PC-9 (cell line): ENCODE measurements at regions of chr1 and their contacts with region 1.

Region 1: GRCh38 chr1:43602990-43603389 is 47.0 kb upstream of the KDM4A start:
- DNase-seq: peak in 1 of 2 experiments; percentile 58
- H3K4me3 ChIP-seq: no peak overlapping the region
- H3K27ac ChIP-seq: no peak overlapping the region
- H3K4me1 ChIP-seq: no peaks in the 10 kb centered on the region
- H3K27me3 ChIP-seq: no peaks in the 10 kb centered on the region
- CTCF ChIP-seq: no peak

Region 2: GRCh38 chr1:43671626-43672330 is 68.8 kb after region 1 on chr1:
- CTCF ChIA-PET with region 1: no interaction called
- POLR2A ChIA-PET with region 1: no interaction called
- intact Hi-C with region 1: loop called (anchors 5 kb)
- DNase-seq: no peak
- H3K4me3 ChIP-seq: no peak overlapping the region
- H3K27ac ChIP-seq: no peak overlapping the region
- H3K4me1 ChIP-seq: no peaks in the 10 kb centered on the region
- H3K27me3 ChIP-seq: no peaks in the 10 kb centered on the region
- CTCF ChIP-seq: no peak

Region 3: GRCh38 chr1:43804569-43804968 is 201.6 kb after region 1 on chr1:
- CTCF ChIA-PET with region 1: no interaction called
- POLR2A ChIA-PET with region 1: no interaction called
- intact Hi-C with region 1: no loop called
- DNase-seq: no peak
- H3K4me3 ChIP-seq: no peak overlapping the region
- H3K27ac ChIP-seq: no peak overlapping the region
- H3K4me1 ChIP-seq: no peaks in the 10 kb centered on the region
- H3K27me3 ChIP-seq: no peaks in the 10 kb centered on the region
- CTCF ChIP-seq: no peak